ENCODE measurements at regions of chr2 and their contacts with region 1.

Region 1: DNA sequence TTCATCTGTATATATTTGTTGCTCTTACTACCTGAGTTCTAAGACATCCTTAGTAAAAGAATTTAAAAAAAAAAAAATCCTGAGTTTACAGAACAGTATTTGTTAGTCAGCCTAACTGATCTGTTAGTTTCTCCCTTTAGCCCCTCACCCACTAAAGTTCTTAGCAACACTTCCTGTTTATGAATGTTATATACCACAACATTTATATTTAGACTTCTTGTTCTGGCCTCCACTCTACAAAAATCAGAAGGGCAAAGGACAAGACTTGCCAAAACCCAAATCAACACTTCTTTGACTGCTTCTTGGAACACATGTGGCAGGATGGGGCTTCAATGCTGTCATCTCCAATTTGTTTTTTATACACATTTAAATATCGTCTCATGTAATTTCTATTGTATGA is 71.1 kb downstream of the MGAT5 start:
- DNase-seq: peak in 3 of 14 experiments; percentile 33 to 69 (median 46)
- ATAC-seq: peak; percentile 38
- H3K4me3 ChIP-seq: no peak overlapping the region
- H3K4me3 Mint-ChIP-seq: no peak overlapping the region
- H3K27ac ChIP-seq: peak overlapping the region in 1 of 2 donors; percentile 30
- H3K27ac Mint-ChIP-seq: no peak overlapping the region
- H3K4me1 ChIP-seq: peaks cover 20% of the 10 kb centered on the region
- H3K4me1 Mint-ChIP-seq: peaks cover 86% of the 10 kb centered on the region
- H3K27me3 ChIP-seq: no peaks in the 10 kb centered on the region
- H3K27me3 Mint-ChIP-seq: no peaks in the 10 kb centered on the region
- CTCF ChIP-seq: no peak

Region 2: DNA sequence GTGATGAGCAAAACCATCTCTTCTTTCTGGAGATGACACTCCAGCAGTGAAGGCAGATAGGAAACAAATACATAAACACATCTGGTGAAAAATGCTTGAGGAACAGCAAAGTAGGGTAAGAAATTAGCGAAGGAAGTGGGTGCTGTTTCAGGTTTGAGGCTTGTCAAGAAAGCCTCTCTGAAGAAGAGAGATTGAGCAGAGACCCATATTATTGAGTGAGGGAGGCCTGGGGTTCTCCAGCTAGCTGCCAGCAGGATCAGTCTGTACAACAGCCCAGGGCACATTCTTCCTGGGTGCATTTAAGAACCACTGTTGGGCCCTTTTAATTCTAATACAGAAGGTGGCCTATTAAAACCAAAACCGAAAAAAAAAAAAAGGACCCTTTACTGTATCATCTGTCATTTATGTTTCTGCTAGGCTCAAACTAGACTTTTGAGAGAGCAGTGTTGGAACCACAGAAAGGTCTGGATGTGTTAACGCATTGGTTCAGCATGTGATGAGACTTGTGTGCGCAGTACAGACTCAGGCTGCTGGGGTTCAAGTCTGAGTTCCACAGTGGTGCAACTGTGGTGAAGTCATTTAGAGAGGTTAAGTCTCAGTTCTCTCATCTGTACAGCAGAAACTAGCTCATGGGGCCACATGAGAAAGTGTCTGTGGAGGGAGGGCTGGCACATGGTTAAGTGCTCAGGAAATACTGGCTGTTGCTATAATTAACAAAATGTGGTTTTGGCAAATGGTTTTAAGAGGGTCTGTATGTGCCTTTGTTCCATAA is 42.1 kb before region 1 on chr2:
- CTCF ChIA-PET with region 1: no interaction called
- POLR2A ChIA-PET with region 1: no interaction called
- intact Hi-C with region 1: loop called in 1 of 2 experiments (anchors 5 kb)
- DNase-seq: peak in 5 of 14 experiments; percentile 11 to 50 (median 47)
- ATAC-seq: peak; percentile 78
- H3K4me3 ChIP-seq: no peak overlapping the region
- H3K4me3 Mint-ChIP-seq: peak overlapping the region; percentile 61
- H3K27ac ChIP-seq: peak overlapping the region; percentile 58 to 61
- H3K27ac Mint-ChIP-seq: peak overlapping the region; percentile 82
- H3K4me1 ChIP-seq: peaks cover 56% of the 10 kb centered on the region
- H3K4me1 Mint-ChIP-seq: peaks cover 75% of the 10 kb centered on the region
- H3K27me3 ChIP-seq: no peaks in the 10 kb centered on the region
- H3K27me3 Mint-ChIP-seq: no peaks in the 10 kb centered on the region
- CTCF ChIP-seq: no peak